ENCODE measurements at regions of chr6 and their contacts with region 1.

Region 1: GRCh38 chr6:144305567-144305966 is 20.4 kb downstream of the UTRN start:
- DNase-seq: no peak
- H3K4me3 ChIP-seq: no peak overlapping the region
- H3K4me3 Mint-ChIP-seq: no peak overlapping the region
- H3K27ac Mint-ChIP-seq: no peak overlapping the region
- H3K4me1 ChIP-seq: peaks cover 51% of the 10 kb centered on the region
- H3K4me1 Mint-ChIP-seq: peaks cover 62% of the 10 kb centered on the region
- H3K27me3 ChIP-seq: no peaks in the 10 kb centered on the region
- H3K27me3 Mint-ChIP-seq: no peaks in the 10 kb centered on the region
- CTCF ChIP-seq: no peak

Region 2: DNA sequence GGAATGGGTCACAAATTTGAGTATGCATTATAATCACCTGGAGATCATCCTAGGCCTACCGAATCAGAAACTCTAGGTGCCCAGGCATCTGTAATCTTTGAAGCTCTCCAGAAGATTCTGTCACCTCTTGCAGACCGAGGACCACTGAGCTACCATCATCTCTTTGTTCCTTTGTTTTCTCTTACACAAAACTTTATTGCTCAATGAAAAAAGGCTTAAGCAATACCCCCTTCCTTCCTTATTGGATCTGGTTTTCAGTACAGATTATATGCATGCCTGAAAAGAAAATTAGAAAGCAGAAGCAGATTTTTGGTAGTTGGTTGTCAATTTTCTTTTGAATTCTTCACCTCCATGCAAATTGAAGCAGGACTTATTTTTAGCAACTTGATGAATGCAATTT is 123.9 kb before region 1 on chr6:
- CTCF ChIA-PET with region 1: no interaction called
- POLR2A ChIA-PET with region 1: no interaction called
- intact Hi-C with region 1: no loop called
- DNase-seq: no peak
- H3K4me3 ChIP-seq: no peak overlapping the region
- H3K4me3 Mint-ChIP-seq: no peak overlapping the region
- H3K27ac Mint-ChIP-seq: no peak overlapping the region
- H3K4me1 ChIP-seq: no peaks in the 10 kb centered on the region; the same call in 1 of the 2 replicates
- H3K4me1 Mint-ChIP-seq: no peaks in the 10 kb centered on the region
- H3K27me3 ChIP-seq: no peaks in the 10 kb centered on the region
- H3K27me3 Mint-ChIP-seq: no peaks in the 10 kb centered on the region
- CTCF ChIP-seq: no peak

Region 3: GRCh38 chr6:144265390-144265789 is 40.2 kb before region 1 on chr6:
- CTCF ChIA-PET with region 1: no interaction called
- POLR2A ChIA-PET with region 1: no interaction called
- intact Hi-C with region 1: loop called (anchors 1 kb)
- DNase-seq: peak; percentile 61 to 73
- H3K4me3 ChIP-seq: no peak overlapping the region; the same call in 1 of the 2 replicates
- H3K4me3 Mint-ChIP-seq: peak overlapping the region; percentile 68
- H3K27ac Mint-ChIP-seq: peak overlapping the region; percentile 97
- H3K4me1 ChIP-seq: peaks cover 59% of the 10 kb centered on the region
- H3K4me1 Mint-ChIP-seq: peaks cover 22% of the 10 kb centered on the region
- H3K27me3 ChIP-seq: no peaks in the 10 kb centered on the region
- H3K27me3 Mint-ChIP-seq: no peaks in the 10 kb centered on the region
- CTCF ChIP-seq: no peak

Region 4: GRCh38 chr6:144334131-144334708 is 28.7 kb after region 1 on chr6:
- CTCF ChIA-PET with region 1: no interaction called
- POLR2A ChIA-PET with region 1: no interaction called
- intact Hi-C with region 1: loop called (anchors 1 kb)
- DNase-seq: no peak
- H3K4me3 ChIP-seq: no peak overlapping the region
- H3K4me3 Mint-ChIP-seq: no peak overlapping the region
- H3K27ac Mint-ChIP-seq: no peak overlapping the region
- H3K4me1 ChIP-seq: peaks cover 52% of the 10 kb centered on the region
- H3K4me1 Mint-ChIP-seq: peaks cover 60% of the 10 kb centered on the region
- H3K27me3 ChIP-seq: no peaks in the 10 kb centered on the region
- H3K27me3 Mint-ChIP-seq: no peaks in the 10 kb centered on the region
- CTCF ChIP-seq: no peak

Region 5: GRCh38 chr6:144349690-144350527 is 44.3 kb after region 1 on chr6:
- CTCF ChIA-PET with region 1: no interaction called
- POLR2A ChIA-PET with region 1: no interaction called
- intact Hi-C with region 1: no loop called
- DNase-seq: no peak
- H3K4me3 ChIP-seq: no peak overlapping the region
- H3K4me3 Mint-ChIP-seq: no peak overlapping the region
- H3K27ac Mint-ChIP-seq: no peak overlapping the region
- H3K4me1 ChIP-seq: peaks cover 6% of the 10 kb centered on the region; the same call in 1 of the 2 replicates
- H3K4me1 Mint-ChIP-seq: peaks cover 18% of the 10 kb centered on the region
- H3K27me3 ChIP-seq: no peaks in the 10 kb centered on the region
- H3K27me3 Mint-ChIP-seq: no peaks in the 10 kb centered on the region
- CTCF ChIP-seq: no peak

Region 6: DNA sequence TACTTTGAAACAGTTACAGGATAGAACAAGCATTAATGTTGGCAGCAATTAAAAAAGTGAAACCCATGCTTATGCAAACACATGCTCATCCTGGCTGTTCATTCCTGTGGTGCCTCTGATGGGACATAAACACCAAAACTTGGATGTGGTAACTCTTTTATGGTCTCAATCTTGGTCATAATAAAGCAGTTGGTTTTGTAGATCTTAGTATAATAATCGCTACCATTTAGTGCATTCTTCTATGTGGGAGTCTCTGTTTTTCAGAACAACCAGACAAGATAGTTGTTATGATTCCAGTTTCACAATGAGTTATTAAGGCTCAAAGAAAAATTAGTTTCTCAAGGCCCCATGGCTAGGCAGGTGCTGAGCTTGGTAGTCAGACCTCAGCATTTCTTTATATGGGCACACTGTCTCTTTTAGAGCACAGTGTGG is 163.6 kb after region 1 on chr6:
- CTCF ChIA-PET with region 1: no interaction called
- POLR2A ChIA-PET with region 1: no interaction called
- intact Hi-C with region 1: loop called (anchors 5 kb)
- DNase-seq: no peak
- H3K4me3 ChIP-seq: no peak overlapping the region
- H3K4me3 Mint-ChIP-seq: no peak overlapping the region
- H3K27ac Mint-ChIP-seq: peak overlapping the region; percentile 59
- H3K4me1 ChIP-seq: peaks cover 35% of the 10 kb centered on the region
- H3K4me1 Mint-ChIP-seq: peaks cover 20% of the 10 kb centered on the region
- H3K27me3 ChIP-seq: no peaks in the 10 kb centered on the region
- H3K27me3 Mint-ChIP-seq: no peaks in the 10 kb centered on the region
- CTCF ChIP-seq: no peak

Measured in Caco-2 (cell line).